ENCODE measurements at regions of chr14 and their contacts with region 1.

Region 1: GRCh38 chr14:68255697-68256203 is 436.2 kb downstream of the RAD51B start:
- DNase-seq: no peak
- ATAC-seq: no peak
- H3K4me3 ChIP-seq: no peak overlapping the region
- H3K27ac ChIP-seq: no peak overlapping the region
- H3K4me1 ChIP-seq: peaks cover 4 to 10% of the 10 kb centered on the region in 2 donors
- H3K27me3 ChIP-seq: no peaks in the 10 kb centered on the region

Region 2: DNA sequence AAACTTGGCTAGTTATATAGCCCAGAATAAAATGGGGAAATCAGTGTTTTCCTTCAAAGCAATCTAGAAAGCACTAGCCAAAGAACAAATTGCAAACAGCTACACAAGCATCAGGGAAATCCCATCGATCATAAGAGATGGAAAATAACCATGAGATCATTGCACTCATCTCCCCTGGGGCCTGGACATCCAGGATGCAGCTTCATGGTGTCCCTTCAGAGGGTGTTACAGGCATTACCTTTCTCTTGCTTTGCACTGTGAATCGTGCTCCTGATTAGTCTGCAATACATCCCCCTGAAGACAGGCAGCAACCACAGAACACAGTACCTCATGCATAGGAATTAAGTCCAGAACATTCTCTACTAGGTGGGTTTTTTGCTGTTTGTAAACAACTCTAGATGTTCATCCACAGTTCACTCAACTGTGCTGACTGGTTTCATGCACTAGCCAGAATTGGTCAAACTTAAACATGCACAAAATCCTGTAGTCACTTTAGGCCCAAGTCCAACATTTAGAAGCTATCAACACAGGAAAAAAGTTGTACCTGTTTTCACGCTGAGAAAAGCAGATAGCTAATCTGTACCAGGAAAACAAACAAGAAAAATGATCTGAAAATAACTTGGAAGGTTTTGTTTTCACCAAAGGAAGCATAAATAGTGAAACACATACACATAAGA is 417.0 kb after region 1 on chr14:
- intact Hi-C with region 1: loop called in 1 of 2 experiments (anchors 2 kb)
- DNase-seq: no peak
- ATAC-seq: no peak
- H3K4me3 ChIP-seq: no peak overlapping the region
- H3K27ac ChIP-seq: no peak overlapping the region
- H3K4me1 ChIP-seq: no peaks in the 10 kb centered on the region
- H3K27me3 ChIP-seq: no peaks in the 10 kb centered on the region

Measured in aorta (tissue), 5 donors.